Caco-2 (cell line): ENCODE measurements at regions of chr11 and their contacts with region 1.

Region 1: GRCh38 chr11:130849215-130849568 is 67.1 kb downstream of the SNX19 start:
- DNase-seq: no peak
- H3K4me3 ChIP-seq: no peak overlapping the region
- H3K4me3 Mint-ChIP-seq: no peak overlapping the region
- H3K27ac Mint-ChIP-seq: no peak overlapping the region
- H3K4me1 ChIP-seq: no peaks in the 10 kb centered on the region
- H3K4me1 Mint-ChIP-seq: no peaks in the 10 kb centered on the region
- H3K27me3 ChIP-seq: no peaks in the 10 kb centered on the region; the same call in 1 of the 2 replicates
- H3K27me3 Mint-ChIP-seq: peaks cover 22% of the 10 kb centered on the region
- CTCF ChIP-seq: no peak

Region 2: DNA sequence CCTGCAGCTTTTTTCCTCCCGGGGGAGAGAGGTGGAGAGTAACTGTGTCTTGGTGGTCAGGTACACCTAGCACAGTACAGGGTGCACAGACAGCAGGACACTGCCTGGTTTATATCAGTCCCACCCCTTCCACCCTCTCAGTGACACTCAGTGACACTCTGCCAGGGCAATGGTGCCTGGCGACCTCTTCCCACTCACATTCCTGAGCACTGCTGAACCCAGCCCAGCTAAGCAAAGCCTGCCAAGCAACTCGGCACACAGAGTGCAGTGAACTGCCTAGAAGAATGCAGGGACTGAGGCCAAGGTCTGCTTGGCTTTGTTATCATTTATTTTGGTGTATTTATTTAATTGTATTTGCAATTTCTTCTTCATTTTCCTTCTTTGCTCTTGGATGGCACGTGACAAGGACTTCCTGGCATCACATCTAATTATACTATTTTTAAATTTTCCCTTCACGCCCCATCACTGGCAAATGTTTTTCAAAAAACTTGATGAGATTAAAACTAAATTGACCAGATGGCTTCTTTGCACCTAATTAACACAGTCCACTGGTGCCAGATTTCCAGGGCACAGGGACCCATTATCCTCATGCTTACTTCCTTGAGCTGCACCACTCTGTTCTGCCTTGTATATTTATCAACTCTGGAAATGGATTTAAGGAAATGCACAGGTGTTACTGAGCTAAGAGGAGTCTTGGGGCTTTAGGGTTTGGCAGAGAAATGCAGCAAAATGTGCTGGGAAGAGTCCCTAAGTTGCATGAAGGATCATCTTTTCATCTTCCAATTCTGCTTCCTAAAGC is 195.2 kb before region 1 on chr11:
- CTCF ChIA-PET with region 1: no interaction called
- POLR2A ChIA-PET with region 1: no interaction called
- intact Hi-C with region 1: no loop called
- DNase-seq: no peak
- H3K4me3 ChIP-seq: no peak overlapping the region
- H3K4me3 Mint-ChIP-seq: no peak overlapping the region
- H3K27ac Mint-ChIP-seq: no peak overlapping the region
- H3K4me1 ChIP-seq: no peaks in the 10 kb centered on the region
- H3K4me1 Mint-ChIP-seq: no peaks in the 10 kb centered on the region
- H3K27me3 ChIP-seq: no peaks in the 10 kb centered on the region
- H3K27me3 Mint-ChIP-seq: peaks cover 14% of the 10 kb centered on the region
- CTCF ChIP-seq: no peak

Region 3: GRCh38 chr11:130671801-130672700 is 177.1 kb before region 1 on chr11:
- CTCF ChIA-PET with region 1: no interaction called
- POLR2A ChIA-PET with region 1: no interaction called
- intact Hi-C with region 1: no loop called
- DNase-seq: peak in 1 of 2 experiments; percentile 30
- H3K4me3 ChIP-seq: no peak overlapping the region
- H3K4me3 Mint-ChIP-seq: no peak overlapping the region
- H3K27ac Mint-ChIP-seq: no peak overlapping the region
- H3K4me1 ChIP-seq: 0 out of 2 replicates have a peak, but pooled peaks cover under 1% of the 10 kb centered on the region
- H3K4me1 Mint-ChIP-seq: peaks cover 2% of the 10 kb centered on the region
- H3K27me3 ChIP-seq: peaks cover 2% of the 10 kb centered on the region; the same call in 1 of the 2 replicates
- H3K27me3 Mint-ChIP-seq: peaks cover 34% of the 10 kb centered on the region
- CTCF ChIP-seq: no peak

Region 4: DNA sequence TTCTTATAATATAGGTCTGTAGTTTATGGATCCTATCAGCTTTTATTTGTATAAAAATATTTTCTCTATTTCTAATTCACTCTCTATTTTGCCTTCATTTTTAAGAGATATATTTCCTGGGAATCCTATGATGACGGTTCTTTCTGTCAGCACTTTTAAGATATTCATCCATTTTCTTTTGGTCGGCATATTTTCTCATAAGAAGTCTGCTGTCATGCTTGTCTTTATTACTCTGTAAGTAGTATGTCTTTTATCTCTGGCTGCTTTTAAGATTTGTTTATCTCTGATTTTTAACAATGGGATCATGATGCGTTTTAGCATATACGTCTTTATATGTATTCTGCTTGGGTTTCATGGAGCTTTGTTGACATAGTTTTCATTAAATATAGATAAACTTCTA is 108.4 kb before region 1 on chr11:
- CTCF ChIA-PET with region 1: no interaction called
- POLR2A ChIA-PET with region 1: no interaction called
- intact Hi-C with region 1: no loop called
- DNase-seq: no peak
- H3K4me3 ChIP-seq: no peak overlapping the region
- H3K4me3 Mint-ChIP-seq: no peak overlapping the region
- H3K27ac Mint-ChIP-seq: no peak overlapping the region
- H3K4me1 ChIP-seq: peaks cover 13% of the 10 kb centered on the region
- H3K4me1 Mint-ChIP-seq: peaks cover 10% of the 10 kb centered on the region
- H3K27me3 ChIP-seq: no peaks in the 10 kb centered on the region
- H3K27me3 Mint-ChIP-seq: no peaks in the 10 kb centered on the region
- CTCF ChIP-seq: no peak

Region 5: DNA sequence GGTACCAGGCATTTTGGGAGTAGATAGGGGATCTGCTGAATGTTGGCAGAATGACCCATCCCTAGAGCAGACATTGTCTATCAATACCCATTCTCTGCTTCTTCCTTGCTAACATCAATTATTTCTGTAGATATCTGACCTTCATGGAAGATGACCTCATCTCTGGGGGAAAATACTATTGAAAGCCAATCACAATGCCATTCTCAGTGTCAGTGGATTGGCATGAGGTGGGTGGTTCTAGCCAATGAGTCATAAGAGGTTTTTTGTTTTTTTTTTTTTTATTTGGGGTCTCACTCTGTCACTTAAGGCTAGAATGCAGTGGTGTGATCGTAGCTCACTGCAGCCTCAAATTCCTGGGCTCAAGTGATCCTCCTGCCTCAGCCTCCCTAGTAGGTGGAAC is 24.6 kb after region 1 on chr11:
- CTCF ChIA-PET with region 1: interaction called, 10 read pairs
- POLR2A ChIA-PET with region 1: no interaction called
- intact Hi-C with region 1: no loop called
- DNase-seq: no peak
- H3K4me3 ChIP-seq: no peak overlapping the region
- H3K4me3 Mint-ChIP-seq: no peak overlapping the region
- H3K27ac Mint-ChIP-seq: no peak overlapping the region
- H3K4me1 ChIP-seq: no peaks in the 10 kb centered on the region
- H3K4me1 Mint-ChIP-seq: no peaks in the 10 kb centered on the region
- H3K27me3 ChIP-seq: no peaks in the 10 kb centered on the region
- H3K27me3 Mint-ChIP-seq: no peaks in the 10 kb centered on the region
- CTCF ChIP-seq: no peak